ENCODE measurements at regions of chr4 and their contacts with region 1.

Region 1: DNA sequence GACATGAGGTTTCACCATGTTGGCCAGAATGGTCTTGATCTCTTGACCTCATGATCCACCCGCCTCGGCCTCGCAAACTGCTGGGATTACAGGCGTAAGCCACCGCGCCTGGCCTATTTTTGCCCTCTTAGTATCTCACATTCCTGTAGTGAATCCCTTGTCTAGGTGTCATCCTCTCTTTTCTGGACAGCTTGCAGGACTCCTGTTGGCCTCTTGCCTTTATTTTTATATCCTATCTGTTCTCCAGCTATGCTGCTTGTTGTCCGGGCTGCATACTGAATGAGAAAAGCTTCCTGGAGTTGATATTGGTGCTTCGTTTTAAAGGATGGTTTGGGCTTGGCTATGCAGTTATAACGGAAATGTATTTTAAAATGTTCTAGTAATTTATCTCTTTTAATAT is 148.6 kb downstream of the TLL1 start:
- DNase-seq: no peak
- ATAC-seq: no peak
- H3K4me3 ChIP-seq: no peak overlapping the region
- H3K4me1 ChIP-seq: no peaks in the 10 kb centered on the region
- CTCF ChIP-seq: no peak

Region 2: GRCh38 chr4:166064721-166065120 is 43.1 kb after region 1 on chr4:
- intact Hi-C with region 1: loop called in 1 of 2 experiments (anchors 1 kb)
- DNase-seq: no peak
- ATAC-seq: no peak
- H3K4me3 ChIP-seq: no peak overlapping the region
- H3K4me1 ChIP-seq: no peaks in the 10 kb centered on the region
- CTCF ChIP-seq: no peak

Measured in mucosa of descending colon (tissue), 3 donors.